ENCODE measurements at regions of chr13 and their contacts with region 1.

Region 1: DNA sequence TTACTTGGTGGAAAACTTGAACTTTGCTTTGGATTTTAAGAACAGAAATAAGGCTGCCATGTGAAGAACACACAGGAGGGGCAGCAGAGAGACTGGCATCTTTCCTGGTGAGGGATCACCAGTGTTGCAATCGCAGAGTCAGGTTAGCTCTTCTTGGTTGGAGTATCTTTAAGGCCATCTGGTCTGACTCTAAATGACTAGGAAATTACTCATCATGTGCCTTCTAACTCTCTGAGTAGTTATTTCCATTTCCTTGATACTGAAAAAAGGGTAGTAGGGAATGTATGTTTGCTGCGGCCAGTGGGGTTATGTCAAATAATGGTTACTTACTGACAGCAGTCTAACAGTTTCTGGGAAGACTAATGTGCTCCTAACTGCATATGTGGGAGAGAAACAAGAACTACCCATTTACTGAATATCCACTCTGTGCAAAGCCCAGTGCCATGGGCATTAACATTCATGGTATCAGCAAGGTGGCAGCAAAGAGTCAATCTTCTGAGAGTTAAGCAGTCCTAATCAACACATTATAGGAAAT is 122.1 kb downstream of the COG6 start:
- DNase-seq: peak; percentile 16
- H3K4me3 Mint-ChIP-seq: peak overlapping the region; percentile 45
- H3K27ac Mint-ChIP-seq: peak overlapping the region; percentile 91
- H3K4me1 Mint-ChIP-seq: peaks cover 50% of the 10 kb centered on the region
- H3K27me3 Mint-ChIP-seq: no peaks in the 10 kb centered on the region

Region 2: GRCh38 chr13:39095500-39095899 is 682.1 kb before region 1 on chr13:
- intact Hi-C with region 1: loop called (anchors 5 kb)
- DNase-seq: no peak
- H3K4me3 Mint-ChIP-seq: peak overlapping the region; percentile 68
- H3K27ac Mint-ChIP-seq: peak overlapping the region; percentile 92
- H3K4me1 Mint-ChIP-seq: peaks cover 35% of the 10 kb centered on the region
- H3K27me3 Mint-ChIP-seq: no peaks in the 10 kb centered on the region

Region 3: DNA sequence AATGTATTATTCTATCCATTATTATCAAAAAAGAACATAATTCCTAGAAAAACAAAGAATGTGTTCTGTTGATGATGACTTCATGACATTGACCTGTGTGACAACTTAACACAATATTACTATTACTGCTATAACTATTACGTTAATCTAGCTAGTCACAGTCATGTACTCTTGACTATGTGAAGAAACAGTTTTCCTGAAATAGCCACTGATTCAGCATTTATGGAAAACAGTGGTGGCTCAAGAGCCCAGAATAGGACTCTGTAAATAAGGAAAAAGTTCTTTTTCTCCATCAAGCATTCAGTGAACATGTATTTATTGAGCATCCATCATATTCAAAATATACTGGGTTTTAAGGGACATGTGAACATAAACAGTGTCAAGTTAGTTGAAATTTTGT is 28.6 kb before region 1 on chr13:
- intact Hi-C with region 1: no loop called
- DNase-seq: no peak
- H3K4me3 Mint-ChIP-seq: no peak overlapping the region
- H3K27ac Mint-ChIP-seq: no peak overlapping the region
- H3K4me1 Mint-ChIP-seq: no peaks in the 10 kb centered on the region
- H3K27me3 Mint-ChIP-seq: no peaks in the 10 kb centered on the region

Region 4: DNA sequence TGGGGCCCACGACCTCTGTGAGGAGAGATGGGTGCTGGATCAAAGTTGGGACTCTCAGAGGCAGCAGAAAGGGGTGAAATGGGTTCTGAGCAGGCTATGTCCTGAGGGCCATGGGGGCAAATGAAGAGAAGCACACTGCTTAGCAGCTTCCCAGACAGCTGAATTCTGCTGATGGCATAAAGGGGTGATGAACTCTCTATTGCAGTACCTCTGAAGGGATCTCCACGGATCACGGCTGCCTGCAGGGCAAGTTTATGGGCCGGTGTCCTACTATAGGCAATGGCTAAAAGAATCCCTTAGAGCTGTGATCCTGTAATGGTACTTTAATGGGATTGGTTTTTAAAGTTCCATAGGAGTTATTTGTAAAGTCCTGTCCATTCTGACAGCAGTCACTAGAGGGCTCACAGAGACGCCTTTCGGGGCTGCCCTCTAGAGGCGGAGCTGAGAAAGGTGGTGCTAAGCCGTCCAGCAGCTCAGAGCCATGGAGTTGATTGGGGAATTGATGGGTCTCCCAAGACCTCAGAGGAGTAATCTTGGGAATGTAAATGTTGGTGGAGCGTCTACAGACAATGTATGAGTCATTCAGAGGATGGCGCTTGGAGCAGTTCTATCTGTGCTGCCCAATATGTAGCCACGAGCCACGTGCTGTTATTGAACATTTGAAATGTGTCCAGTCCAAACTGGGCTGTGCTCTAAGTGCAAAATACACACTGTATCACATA is 165.1 kb after region 1 on chr13:
- intact Hi-C with region 1: loop called (anchors 1 kb)
- DNase-seq: peak; percentile 54
- H3K4me3 Mint-ChIP-seq: no peak overlapping the region
- H3K27ac Mint-ChIP-seq: no peak overlapping the region
- H3K4me1 Mint-ChIP-seq: peaks cover 6% of the 10 kb centered on the region
- H3K27me3 Mint-ChIP-seq: peaks cover 4% of the 10 kb centered on the region

Region 5: DNA sequence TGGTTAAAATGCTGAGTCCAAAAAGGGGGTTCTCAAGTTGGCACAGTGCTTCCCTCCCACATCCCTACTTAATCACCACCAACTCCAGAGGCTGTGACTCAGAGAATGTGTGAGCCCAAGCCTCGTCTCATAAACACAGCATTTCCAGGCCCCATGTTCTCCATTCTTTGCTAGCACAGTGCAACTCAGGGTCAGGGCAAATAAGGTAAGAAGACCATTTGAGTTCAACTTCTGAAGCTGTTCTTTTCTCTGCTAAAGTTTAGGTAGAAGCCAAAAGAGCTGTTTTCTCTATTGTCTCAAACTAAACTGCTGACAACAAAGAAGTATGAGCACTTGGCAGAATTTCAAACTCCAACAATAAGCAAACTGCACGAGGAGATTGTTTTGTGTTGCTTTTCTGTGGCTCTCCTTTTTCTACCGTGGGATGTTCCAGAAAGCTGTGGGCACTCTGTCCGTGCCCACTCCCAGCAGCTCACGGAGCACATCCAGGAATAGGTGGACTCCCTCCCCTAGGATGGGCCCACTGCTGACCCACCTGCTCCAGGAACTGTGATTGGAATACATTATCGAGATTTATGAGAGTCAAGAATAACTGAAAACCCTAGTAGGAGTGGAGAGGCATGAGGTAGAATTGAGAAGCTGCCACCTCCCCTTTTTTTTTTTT is 372.1 kb after region 1 on chr13:
- intact Hi-C with region 1: loop called (anchors 2 kb)
- DNase-seq: no peak
- H3K4me3 Mint-ChIP-seq: no peak overlapping the region
- H3K27ac Mint-ChIP-seq: no peak overlapping the region
- H3K4me1 Mint-ChIP-seq: peaks cover 67% of the 10 kb centered on the region
- H3K27me3 Mint-ChIP-seq: no peaks in the 10 kb centered on the region

Region 6: GRCh38 chr13:40388617-40389016 is 611.0 kb after region 1 on chr13:
- intact Hi-C with region 1: loop called (anchors 2 kb)
- DNase-seq: peak; percentile 79
- H3K4me3 Mint-ChIP-seq: peak overlapping the region; percentile 76
- H3K27ac Mint-ChIP-seq: peak overlapping the region; percentile 96
- H3K4me1 Mint-ChIP-seq: peaks cover 56% of the 10 kb centered on the region
- H3K27me3 Mint-ChIP-seq: no peaks in the 10 kb centered on the region

Region 7: DNA sequence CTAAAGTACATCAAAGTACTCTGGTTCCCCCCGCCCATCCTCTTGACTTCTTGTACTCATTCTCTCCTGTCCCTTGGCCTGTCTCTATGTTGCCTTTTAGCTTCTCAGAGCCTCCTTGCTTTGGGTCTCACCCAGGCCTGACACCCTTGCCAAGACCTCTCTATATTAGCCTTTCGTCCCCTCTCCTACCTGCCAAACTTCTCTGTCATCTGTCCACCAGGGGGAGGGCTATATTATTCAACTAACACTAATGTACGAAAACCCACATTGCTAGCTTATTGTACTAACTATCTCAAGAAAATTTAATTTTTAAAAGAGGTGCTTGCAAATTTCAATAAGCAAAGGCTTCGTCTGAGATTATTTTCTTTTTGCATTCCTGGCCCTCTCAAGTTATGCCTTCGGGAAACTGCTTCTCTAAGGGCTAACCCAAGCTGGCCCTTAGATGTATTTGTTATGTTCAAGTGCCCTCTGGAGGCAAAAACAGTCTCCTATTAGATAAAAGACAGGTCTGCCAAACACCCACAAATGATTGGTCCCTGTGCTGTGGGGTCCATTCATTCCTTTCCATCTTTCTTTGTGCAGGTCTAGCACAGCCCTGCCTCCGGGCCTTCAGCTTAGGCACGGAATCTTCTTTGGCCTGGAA is 999.7 kb after region 1 on chr13:
- intact Hi-C with region 1: loop called (anchors 2 kb)
- DNase-seq: peak; percentile 28
- H3K4me3 Mint-ChIP-seq: peak overlapping the region; percentile 76
- H3K27ac Mint-ChIP-seq: peak overlapping the region; percentile 99
- H3K4me1 Mint-ChIP-seq: peaks cover 33% of the 10 kb centered on the region
- H3K27me3 Mint-ChIP-seq: no peaks in the 10 kb centered on the region

Measured in activated T-helper 1 cell treated with anti-CD3 and anti-CD28 coated beads, Interleukin-12 subunit alpha, Interleukin-12 subunit beta, Interleukin-2, Interleukin-4 antibody, amounts not matched to agents 30 ng/mL and 10 ng/mL and 1 ng/mL, durations not matched to agents 14 hours and 24 hours and 36 hours (primary cell).